Left ventricle myocardium inferior (tissue), 1 donor: ENCODE measurements at regions of chr6 and their contacts with region 1.

Region 1: GRCh38 chr6:136226027-136226673 is 24.0 kb downstream of the MTFR2 start:
- DNase-seq: peak; percentile 27
- H3K4me3 ChIP-seq: peak overlapping the region; percentile 43
- H3K27ac ChIP-seq: peak overlapping the region; percentile 5
- H3K4me1 ChIP-seq: peaks cover 7% of the 10 kb centered on the region
- H3K27me3 ChIP-seq: no peaks in the 10 kb centered on the region
- CTCF ChIP-seq: peak; percentile 100

Region 2: GRCh38 chr6:135540207-135540840 is 685.8 kb before region 1 on chr6:
- intact Hi-C with region 1: loop called (anchors 5 kb)
- DNase-seq: no peak
- H3K4me3 ChIP-seq: no peak overlapping the region
- H3K27ac ChIP-seq: no peak overlapping the region
- H3K4me1 ChIP-seq: no peaks in the 10 kb centered on the region
- H3K27me3 ChIP-seq: no peaks in the 10 kb centered on the region
- CTCF ChIP-seq: peak; percentile 51

Region 3: DNA sequence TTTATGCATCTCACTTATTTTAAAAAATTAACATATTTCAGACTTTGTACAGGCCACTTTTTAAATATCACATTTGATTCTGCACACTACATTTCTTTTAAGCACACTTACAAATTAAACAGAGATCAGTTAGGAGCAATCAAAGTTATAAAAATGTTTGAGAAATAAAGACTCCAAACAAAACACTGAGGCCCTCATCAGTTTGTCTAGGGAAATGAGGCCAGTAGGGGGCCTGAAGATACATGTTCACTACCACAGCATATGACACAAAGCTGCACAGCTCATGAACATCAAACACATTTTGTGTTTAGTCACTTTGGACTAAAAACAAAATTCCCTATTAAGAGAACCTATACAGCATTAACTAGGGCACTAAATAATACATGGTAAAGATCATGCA is 194.2 kb before region 1 on chr6:
- intact Hi-C with region 1: loop called (anchors 5 kb)
- DNase-seq: no peak
- H3K4me3 ChIP-seq: no peak overlapping the region
- H3K27ac ChIP-seq: peak overlapping the region; percentile 26
- H3K4me1 ChIP-seq: peaks cover 46% of the 10 kb centered on the region
- H3K27me3 ChIP-seq: no peaks in the 10 kb centered on the region
- CTCF ChIP-seq: peak; percentile 73

Region 4: DNA sequence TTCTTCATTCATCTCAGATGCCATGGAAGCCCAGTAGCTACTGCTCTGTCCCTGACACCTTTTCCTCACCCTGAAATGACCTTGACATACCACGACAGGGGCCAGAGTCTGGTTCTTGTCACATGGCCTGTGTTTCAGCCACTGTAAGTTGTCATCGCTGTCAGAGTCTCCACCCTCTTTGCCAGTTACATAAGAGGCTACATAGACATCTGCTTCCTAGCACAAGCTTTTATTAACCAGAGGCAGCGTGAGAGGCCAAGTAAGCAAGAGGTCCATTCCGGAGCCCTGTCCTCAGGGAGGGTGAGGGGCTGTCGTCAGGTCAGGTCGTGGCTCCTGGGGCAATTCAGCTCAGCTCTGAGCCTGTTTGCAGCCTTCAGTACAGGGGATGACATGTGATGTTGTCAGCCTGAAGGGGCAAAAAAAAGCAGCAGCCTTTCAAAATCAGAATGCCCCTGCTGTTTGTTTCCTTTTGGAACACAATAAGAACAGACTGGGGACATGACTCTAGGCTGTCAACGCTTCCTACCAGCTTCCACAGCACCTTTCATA is 122.3 kb before region 1 on chr6:
- intact Hi-C with region 1: no loop called
- DNase-seq: peak; percentile 84
- H3K4me3 ChIP-seq: peak overlapping the region; percentile 35
- H3K27ac ChIP-seq: peak overlapping the region; percentile 91
- H3K4me1 ChIP-seq: peaks cover 83% of the 10 kb centered on the region
- H3K27me3 ChIP-seq: no peaks in the 10 kb centered on the region
- CTCF ChIP-seq: no peak

Region 5: GRCh38 chr6:136669299-136669699 is 443.1 kb after region 1 on chr6:
- intact Hi-C with region 1: no loop called
- DNase-seq: no peak
- H3K4me3 ChIP-seq: no peak overlapping the region
- H3K27ac ChIP-seq: no peak overlapping the region
- H3K4me1 ChIP-seq: peaks cover 9% of the 10 kb centered on the region
- H3K27me3 ChIP-seq: no peaks in the 10 kb centered on the region
- CTCF ChIP-seq: no peak